CD4-positive, alpha-beta memory T cell (primary cell): ENCODE measurements at regions of chr2 and their contacts with region 1.

Region 1: DNA sequence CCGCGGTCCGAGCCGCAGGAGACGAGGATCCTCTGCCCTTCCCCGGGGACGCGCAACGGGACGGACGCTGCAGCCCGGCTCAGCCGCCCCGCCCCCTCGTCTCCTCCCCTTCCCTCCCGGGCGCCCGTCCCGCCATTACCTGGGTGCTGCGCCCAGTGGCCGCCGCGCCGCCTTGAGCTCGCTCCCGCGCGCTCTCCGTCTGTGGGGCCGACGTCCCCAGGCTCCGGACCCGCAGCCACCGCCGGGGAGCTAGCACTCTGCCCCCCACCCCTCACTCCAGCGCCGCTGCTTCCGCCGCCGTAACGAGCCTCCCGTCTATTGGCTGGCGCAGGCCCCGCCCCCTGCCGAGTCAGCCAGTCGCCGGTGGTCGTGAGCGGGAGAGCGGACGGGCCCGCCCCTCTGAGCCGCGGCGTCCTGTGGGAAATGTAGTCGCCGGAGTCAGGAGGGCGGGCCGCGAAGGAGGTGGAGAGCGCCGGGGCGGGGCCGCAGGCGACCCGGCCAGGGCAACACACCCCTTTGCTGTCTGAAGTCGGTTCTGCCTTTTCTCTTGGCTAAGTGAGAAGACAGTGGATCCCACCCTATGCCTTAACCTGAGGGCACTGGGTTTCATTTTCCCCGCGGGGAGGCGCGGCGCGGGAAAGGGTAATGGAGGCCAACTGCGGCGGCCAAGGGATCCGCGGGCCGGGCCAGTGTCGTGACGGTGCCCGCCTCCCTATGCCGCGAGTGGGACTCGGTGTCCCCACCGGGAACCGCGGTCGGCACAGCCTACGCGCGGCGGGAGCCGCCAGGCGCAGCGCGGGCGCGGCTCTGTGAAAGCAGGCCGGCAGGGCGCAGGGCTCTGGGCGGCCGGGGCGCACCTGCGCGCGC is at the start of gene SAP130:
- DNase-seq: peak; percentile 97 to 99 (median 98)
- H3K4me3 ChIP-seq: peak within 1 kb of the TSS; percentile 36 to 82
- H3K4me3 Mint-ChIP-seq: peak within 1 kb of the TSS; percentile 94 to 99 (median 98)
- H3K27ac ChIP-seq: peak within 1 kb of the TSS; percentile 73
- H3K27ac Mint-ChIP-seq: peak within 1 kb of the TSS; percentile 93 to 98 (median 97)
- H3K4me1 ChIP-seq: peaks cover 23% of the 10 kb centered on the region
- H3K4me1 Mint-ChIP-seq: peaks cover 15 to 24% (median 20%) of the 10 kb centered on the region in 4 donors
- H3K27me3 ChIP-seq: no peaks in the 10 kb centered on the region
- H3K27me3 Mint-ChIP-seq: no peaks in the 10 kb centered on the region
- total RNA-seq, gene SAP130: 25.5 to 30.2 TPM

Region 2: GRCh38 chr2:127810619-127811396 is 217.2 kb before region 1 on chr2 and contains the start of gene WDR33:
- CTCF ChIA-PET with region 1: no interaction called
- POLR2A ChIA-PET with region 1: no interaction called
- intact Hi-C with region 1: loop called (anchors 5 kb)
- DNase-seq: peak; percentile 92 to 95 (median 93)
- H3K4me3 ChIP-seq: peak within 1 kb of the TSS; percentile 68 to 98
- H3K4me3 Mint-ChIP-seq: peak within 1 kb of the TSS; percentile 93 to 99 (median 98)
- H3K27ac ChIP-seq: peak within 1 kb of the TSS; percentile 96
- H3K27ac Mint-ChIP-seq: peak within 1 kb of the TSS; percentile 98 to 100 (median 99)
- H3K4me1 ChIP-seq: peaks cover 47% of the 10 kb centered on the region
- H3K4me1 Mint-ChIP-seq: peaks cover 34 to 59% (median 48%) of the 10 kb centered on the region in 4 donors
- H3K27me3 ChIP-seq: no peaks in the 10 kb centered on the region
- H3K27me3 Mint-ChIP-seq: peaks cover 0 to 4% of the 10 kb centered on the region in 2 donors
- total RNA-seq, gene WDR33: 84.9 to 86.2 TPM

Region 3: GRCh38 chr2:127884436-127885345 is 143.3 kb before region 1 on chr2:
- CTCF ChIA-PET with region 1: no interaction called
- POLR2A ChIA-PET with region 1: interaction called, 4 read pairs
- intact Hi-C with region 1: loop called (anchors 2 kb)
- DNase-seq: no peak
- H3K4me3 ChIP-seq: peak overlapping the region; percentile 28 to 33
- H3K4me3 Mint-ChIP-seq: peak overlapping the region; percentile 87 to 95 (median 92)
- H3K27ac ChIP-seq: peak overlapping the region; percentile 46
- H3K27ac Mint-ChIP-seq: peak overlapping the region; percentile 86 to 95 (median 90)
- H3K4me1 ChIP-seq: peaks cover 24% of the 10 kb centered on the region
- H3K4me1 Mint-ChIP-seq: peaks cover 36 to 65% (median 50%) of the 10 kb centered on the region in 4 donors
- H3K27me3 ChIP-seq: no peaks in the 10 kb centered on the region
- H3K27me3 Mint-ChIP-seq: no peaks in the 10 kb centered on the region

Region 4: GRCh38 chr2:128090945-128091725 is 63.1 kb after region 1 on chr2 and contains the start of gene UGGT1:
- CTCF ChIA-PET with region 1: interaction called, 11 read pairs
- POLR2A ChIA-PET with region 1: interaction called, 67 read pairs
- intact Hi-C with region 1: loop called (anchors 1 kb)
- DNase-seq: peak; percentile 91 to 95 (median 93)
- H3K4me3 ChIP-seq: peak within 1 kb of the TSS; percentile 86 to 98
- H3K4me3 Mint-ChIP-seq: peak within 1 kb of the TSS; percentile 88 to 98 (median 93)
- H3K27ac ChIP-seq: peak within 1 kb of the TSS; percentile 81
- H3K27ac Mint-ChIP-seq: peak within 1 kb of the TSS; percentile 90 to 98 (median 96)
- H3K4me1 ChIP-seq: peaks cover 33% of the 10 kb centered on the region
- H3K4me1 Mint-ChIP-seq: peaks cover 27 to 61% (median 40%) of the 10 kb centered on the region in 4 donors
- H3K27me3 ChIP-seq: no peaks in the 10 kb centered on the region
- H3K27me3 Mint-ChIP-seq: no peaks in the 10 kb centered on the region
- total RNA-seq, gene UGGT1: 56.8 to 60.2 TPM

Region 5: GRCh38 chr2:128232965-128233789 is 205.1 kb after region 1 on chr2:
- CTCF ChIA-PET with region 1: no interaction called
- POLR2A ChIA-PET with region 1: no interaction called
- intact Hi-C with region 1: loop called (anchors 1 kb)
- DNase-seq: peak; percentile 72 to 77 (median 76)
- H3K4me3 ChIP-seq: peak overlapping the region; percentile 11 to 70
- H3K4me3 Mint-ChIP-seq: peak overlapping the region; percentile 85 to 93 (median 88)
- H3K27ac ChIP-seq: no peak overlapping the region
- H3K27ac Mint-ChIP-seq: peak overlapping the region in 4 of 7 donors; percentile 36 to 78 (median 62)
- H3K4me1 ChIP-seq: peaks cover 5% of the 10 kb centered on the region
- H3K4me1 Mint-ChIP-seq: peaks cover 1 to 7% (median 4%) of the 10 kb centered on the region in 4 donors
- H3K27me3 ChIP-seq: no peaks in the 10 kb centered on the region
- H3K27me3 Mint-ChIP-seq: peaks cover 2 to 8% of the 10 kb centered on the region in 2 donors

Region 6: DNA sequence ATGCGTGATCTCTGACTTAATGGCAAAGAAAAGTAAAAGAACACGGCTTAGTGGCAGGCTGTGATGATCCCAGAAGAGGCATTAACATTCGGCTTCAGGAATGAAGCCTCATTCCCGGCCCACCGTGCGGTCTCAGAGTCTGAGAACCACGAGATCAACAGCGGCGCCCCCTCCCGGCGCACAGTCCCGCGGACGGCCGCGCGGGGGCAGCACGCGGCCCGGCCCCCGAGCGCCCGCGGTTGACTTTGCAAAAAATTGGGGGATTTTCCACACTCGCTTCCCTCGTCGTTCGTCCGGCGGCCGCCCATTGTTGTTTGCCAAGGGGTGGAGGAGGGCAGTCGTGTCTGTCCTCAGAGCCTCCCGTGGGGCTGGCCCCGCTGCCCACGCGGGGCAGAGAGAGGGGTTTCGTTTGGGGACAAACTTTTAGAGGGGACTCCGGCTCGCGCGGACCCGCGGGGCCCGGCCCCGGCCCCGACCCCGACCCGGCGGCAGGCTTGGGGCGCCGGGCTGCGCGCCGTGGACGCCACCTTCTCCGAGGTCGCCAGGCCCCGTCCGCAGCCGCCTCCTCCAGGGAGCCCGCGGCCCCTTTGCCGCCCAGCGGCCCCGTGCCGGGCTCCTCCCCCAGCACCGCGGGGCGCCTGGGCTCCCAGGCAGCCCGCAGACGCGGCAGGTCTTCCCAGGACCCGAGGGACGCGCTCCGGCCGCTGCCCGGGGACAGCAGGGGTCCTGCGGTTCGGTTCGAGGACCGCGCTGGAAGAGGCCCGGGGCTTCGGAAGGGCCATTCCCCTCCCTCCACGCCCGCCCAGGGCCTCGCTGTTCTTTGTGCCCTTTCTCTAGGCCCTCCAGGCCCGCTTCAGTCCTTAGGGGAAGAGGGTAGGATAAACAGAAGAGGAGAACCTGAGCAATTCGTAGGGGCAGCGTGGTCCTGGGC is 294.0 kb after region 1 on chr2:
- CTCF ChIA-PET with region 1: no interaction called
- POLR2A ChIA-PET with region 1: no interaction called
- intact Hi-C with region 1: loop called (anchors 2 kb)
- DNase-seq: peak; percentile 69 to 83 (median 78)
- H3K4me3 ChIP-seq: peak overlapping the region in 1 of 2 donors; percentile 58
- H3K4me3 Mint-ChIP-seq: peak overlapping the region; percentile 65 to 82 (median 76)
- H3K27ac ChIP-seq: peak overlapping the region; percentile 30
- H3K27ac Mint-ChIP-seq: peak overlapping the region in 4 of 7 donors; percentile 69 to 90 (median 77)
- H3K4me1 ChIP-seq: peaks cover 19% of the 10 kb centered on the region
- H3K4me1 Mint-ChIP-seq: peaks cover 6 to 21% (median 14%) of the 10 kb centered on the region in 4 donors
- H3K27me3 ChIP-seq: no peaks in the 10 kb centered on the region
- H3K27me3 Mint-ChIP-seq: no peaks in the 10 kb centered on the region

Region 7: DNA sequence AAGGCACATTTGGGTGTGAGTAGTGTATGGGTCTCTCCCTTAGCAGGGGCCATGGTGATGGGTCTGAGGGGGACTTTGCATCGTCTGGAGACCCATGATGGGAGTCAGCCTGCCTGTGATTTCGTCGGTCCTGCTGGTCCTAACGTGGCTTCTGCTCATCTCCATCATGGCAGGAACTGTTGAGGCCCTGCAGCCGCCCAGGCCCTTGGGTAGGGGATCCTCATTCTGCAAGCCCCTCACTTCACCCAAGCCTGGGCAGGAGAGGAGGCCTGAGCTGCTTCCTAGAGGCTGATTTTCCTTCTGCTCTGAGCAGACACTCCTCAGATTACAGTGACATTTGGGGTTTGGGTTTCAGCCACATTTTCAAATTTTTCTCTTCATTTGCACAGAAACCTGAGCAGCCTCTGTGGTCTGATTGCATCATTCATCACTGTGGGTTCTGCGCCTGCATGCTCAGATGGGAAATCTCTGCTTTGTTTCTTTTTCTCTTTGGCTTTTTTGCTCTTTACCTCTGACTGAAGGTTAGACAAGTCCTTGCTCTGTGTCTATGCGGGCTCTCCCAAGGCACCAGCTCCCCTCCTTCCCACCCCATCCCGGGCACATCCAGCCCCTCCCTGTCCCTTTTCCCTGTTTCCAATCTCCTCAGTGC is 595.9 kb after region 1 on chr2:
- CTCF ChIA-PET with region 1: no interaction called
- POLR2A ChIA-PET with region 1: no interaction called
- intact Hi-C with region 1: no loop called
- DNase-seq: no peak
- H3K4me3 ChIP-seq: no peak overlapping the region
- H3K4me3 Mint-ChIP-seq: no peak overlapping the region
- H3K27ac ChIP-seq: no peak overlapping the region
- H3K27ac Mint-ChIP-seq: no peak overlapping the region
- H3K4me1 ChIP-seq: no peaks in the 10 kb centered on the region
- H3K4me1 Mint-ChIP-seq: no peaks in the 10 kb centered on the region
- H3K27me3 ChIP-seq: no peaks in the 10 kb centered on the region
- H3K27me3 Mint-ChIP-seq: peaks cover 2 to 3% of the 10 kb centered on the region in 2 donors

Region 8: DNA sequence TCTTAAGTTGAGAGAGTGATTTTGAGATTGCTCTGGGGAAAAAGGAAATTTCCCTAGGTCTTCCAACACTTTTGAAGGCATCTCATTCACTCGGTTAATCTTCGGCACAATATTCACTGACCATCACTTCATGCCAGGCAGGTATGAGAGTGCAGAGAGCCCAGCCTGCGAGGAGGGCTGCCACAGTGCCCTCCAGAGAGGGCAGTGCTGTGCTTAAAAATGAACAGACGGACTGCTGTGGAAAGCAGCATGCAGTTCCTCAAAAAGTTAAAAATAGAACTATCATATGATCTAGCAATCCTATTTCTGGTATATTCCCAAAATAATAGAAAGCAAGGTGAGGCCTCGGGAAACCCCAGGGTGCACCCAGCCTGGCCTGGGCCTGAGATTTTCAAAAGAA is 1576.5 kb after region 1 on chr2:
- CTCF ChIA-PET with region 1: no interaction called
- POLR2A ChIA-PET with region 1: no interaction called
- intact Hi-C with region 1: no loop called
- DNase-seq: no peak
- H3K4me3 ChIP-seq: no peak overlapping the region
- H3K4me3 Mint-ChIP-seq: no peak overlapping the region
- H3K27ac ChIP-seq: no peak overlapping the region
- H3K27ac Mint-ChIP-seq: no peak overlapping the region
- H3K4me1 ChIP-seq: no peaks in the 10 kb centered on the region
- H3K4me1 Mint-ChIP-seq: no peaks in the 10 kb centered on the region
- H3K27me3 ChIP-seq: no peaks in the 10 kb centered on the region
- H3K27me3 Mint-ChIP-seq: peaks cover 2 to 3% of the 10 kb centered on the region in 2 donors